Gastrocnemius medialis (tissue), 4 donors: ENCODE measurements at regions of chr3 and their contacts with region 1.

Region 1: DNA sequence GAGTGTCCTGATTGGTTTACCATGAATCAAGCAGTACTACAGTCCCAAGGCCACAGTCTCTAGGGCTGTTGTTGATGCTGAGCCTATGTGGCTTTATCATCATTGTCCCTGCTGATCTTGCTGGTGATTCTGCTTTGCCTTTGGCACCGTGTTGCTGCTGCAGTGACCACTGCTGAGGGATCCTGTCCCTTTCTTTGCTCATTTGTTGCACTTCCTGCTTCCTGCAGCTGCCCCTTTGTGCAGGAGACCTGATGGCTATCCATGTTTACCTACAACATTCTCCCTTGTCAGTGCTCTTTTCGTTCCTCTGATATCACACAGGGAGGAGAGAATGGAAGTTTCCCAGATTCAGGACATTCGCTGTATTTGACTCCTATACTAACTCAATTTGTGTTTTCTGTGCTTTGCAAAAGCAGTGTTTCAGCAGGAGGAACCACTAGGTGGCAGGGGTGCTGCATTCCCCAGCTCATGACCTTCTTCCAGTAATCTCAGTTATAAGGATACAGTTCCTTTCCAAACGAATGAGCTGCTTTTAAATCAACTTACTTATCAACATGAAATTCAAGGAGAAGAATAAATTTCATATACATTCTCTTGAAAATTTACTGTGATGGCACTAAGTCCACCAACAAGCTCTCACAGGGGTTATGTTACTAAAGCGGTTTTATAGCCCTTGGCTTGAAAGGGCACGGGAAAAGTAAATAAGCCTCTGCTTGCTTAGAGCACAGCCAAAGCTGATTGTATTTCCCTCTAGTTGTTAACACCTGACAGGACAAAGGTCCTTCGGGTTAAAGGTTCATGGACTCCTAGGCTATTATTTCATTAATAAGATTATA is 9.7 kb upstream of the THUMPD3 start:
- DNase-seq: peak; percentile 16 to 56
- ATAC-seq: peak; percentile 82 to 93
- H3K4me3 ChIP-seq: no peak overlapping the region
- H3K27ac ChIP-seq: peak overlapping the region in 3 of 4 donors; percentile 26 to 51 (median 34)
- H3K4me1 ChIP-seq: peaks cover 6 to 8% of the 10 kb centered on the region in 2 donors
- H3K27me3 ChIP-seq: no peaks in the 10 kb centered on the region
- CTCF ChIP-seq: peak; percentile 76 to 87 (median 78)
- POLR2A ChIP-seq: no peak

Region 2: GRCh38 chr3:9422712-9423424 is 69.7 kb after region 1 on chr3:
- in situ Hi-C with region 1: no loop called
- intact Hi-C with region 1: loop called (anchors 2 kb)
- DNase-seq: peak; percentile 82 to 85
- ATAC-seq: peak; percentile 98 to 99
- H3K4me3 ChIP-seq: peak overlapping the region in 1 of 4 donors; percentile 6
- H3K27ac ChIP-seq: peak overlapping the region; percentile 82 to 86 (median 84)
- H3K4me1 ChIP-seq: peaks cover 49 to 54% of the 10 kb centered on the region in 2 donors
- H3K27me3 ChIP-seq: no peaks in the 10 kb centered on the region
- CTCF ChIP-seq: peak; percentile 31 to 72 (median 53)
- POLR2A ChIP-seq: no peak

Region 3: GRCh38 chr3:9439331-9439730 is 86.2 kb after region 1 on chr3:
- in situ Hi-C with region 1: loop called in 1 of 4 experiments (anchors 10 kb)
- intact Hi-C with region 1: no loop called
- DNase-seq: no peak
- ATAC-seq: no peak
- H3K4me3 ChIP-seq: no peak overlapping the region
- H3K27ac ChIP-seq: no peak overlapping the region
- H3K4me1 ChIP-seq: peaks cover 0 to 3% of the 10 kb centered on the region in 2 donors
- H3K27me3 ChIP-seq: no peaks in the 10 kb centered on the region
- CTCF ChIP-seq: no peak
- POLR2A ChIP-seq: no peak

Region 4: GRCh38 chr3:9503283-9503682 is 150.1 kb after region 1 on chr3:
- in situ Hi-C with region 1: no loop called
- intact Hi-C with region 1: loop called (anchors 1 kb)
- DNase-seq: peak in 1 of 2 donors; percentile 39
- ATAC-seq: peak in 1 of 2 donors; percentile 33
- H3K4me3 ChIP-seq: no peak overlapping the region
- H3K27ac ChIP-seq: no peak overlapping the region
- H3K4me1 ChIP-seq: peaks cover 4 to 6% of the 10 kb centered on the region in 2 donors
- H3K27me3 ChIP-seq: peaks cover 22 to 26% (median 24%) of the 10 kb centered on the region in 3 donors
- CTCF ChIP-seq: peak; percentile 52 to 78 (median 69)
- POLR2A ChIP-seq: no peak